ENCODE measurements at regions of chr17 and their contacts with region 1.

Region 1: GRCh38 chr17:82030470-82031302 is 792 bp upstream of the RAC3 start:
- DNase-seq: peak; percentile 78 to 88 (median 85)
- H3K4me3 ChIP-seq: peak overlapping the region in 1 of 2 donors; percentile 46
- H3K4me3 Mint-ChIP-seq: peak overlapping the region; percentile 79 to 89 (median 86)
- H3K27ac ChIP-seq: no peak overlapping the region
- H3K27ac Mint-ChIP-seq: peak overlapping the region in 6 of 7 donors; percentile 48 to 91 (median 76)
- H3K4me1 ChIP-seq: peaks cover 13% of the 10 kb centered on the region
- H3K4me1 Mint-ChIP-seq: peaks cover 5 to 14% (median 10%) of the 10 kb centered on the region in 4 donors
- H3K27me3 ChIP-seq: no peaks in the 10 kb centered on the region
- H3K27me3 Mint-ChIP-seq: no peaks in the 10 kb centered on the region

Region 2: DNA sequence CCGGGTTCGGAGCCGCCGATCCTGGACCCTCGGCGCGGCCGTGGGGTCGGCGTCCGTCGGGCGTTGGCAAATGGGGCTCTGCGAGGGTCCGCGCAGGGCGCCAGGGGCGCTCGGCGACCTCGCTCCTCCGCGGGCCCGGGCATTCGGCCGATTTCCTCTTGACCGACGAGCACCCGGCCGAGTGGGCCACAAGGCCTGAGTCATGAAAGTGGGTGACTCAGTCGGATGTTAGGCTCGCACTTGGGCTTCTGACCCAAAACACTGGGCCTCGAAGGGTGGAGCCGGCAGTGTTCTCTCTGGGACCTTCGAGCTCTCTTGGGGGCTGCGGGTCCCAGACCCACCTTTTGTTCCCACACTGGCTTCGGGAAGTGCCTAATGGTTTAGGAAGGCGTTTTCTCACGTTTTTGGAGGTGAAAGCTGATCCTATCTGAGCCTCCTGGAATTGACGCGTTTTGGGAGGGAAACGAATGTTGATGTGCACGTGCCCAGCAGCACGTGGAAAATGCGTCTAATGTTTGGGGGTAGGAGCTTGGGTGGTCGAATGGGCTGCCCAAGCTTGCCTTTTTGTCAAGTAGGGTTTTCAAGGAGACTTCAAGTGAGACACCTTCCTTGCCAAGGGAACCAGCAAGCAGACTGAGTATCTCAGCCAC is 346.3 kb before region 1 on chr17:
- CTCF ChIA-PET with region 1: no interaction called
- POLR2A ChIA-PET with region 1: no interaction called
- intact Hi-C with region 1: no loop called
- DNase-seq: peak in 1 of 5 donors; percentile 39
- H3K4me3 ChIP-seq: peak overlapping the region; percentile 80 to 93
- H3K4me3 Mint-ChIP-seq: peak overlapping the region; percentile 83 to 94 (median 84)
- H3K27ac ChIP-seq: peak overlapping the region; percentile 83
- H3K27ac Mint-ChIP-seq: peak overlapping the region; percentile 72 to 93 (median 83)
- H3K4me1 ChIP-seq: peaks cover 31% of the 10 kb centered on the region
- H3K4me1 Mint-ChIP-seq: peaks cover 20 to 58% (median 27%) of the 10 kb centered on the region in 4 donors
- H3K27me3 ChIP-seq: no peaks in the 10 kb centered on the region
- H3K27me3 Mint-ChIP-seq: no peaks in the 10 kb centered on the region

Region 3: DNA sequence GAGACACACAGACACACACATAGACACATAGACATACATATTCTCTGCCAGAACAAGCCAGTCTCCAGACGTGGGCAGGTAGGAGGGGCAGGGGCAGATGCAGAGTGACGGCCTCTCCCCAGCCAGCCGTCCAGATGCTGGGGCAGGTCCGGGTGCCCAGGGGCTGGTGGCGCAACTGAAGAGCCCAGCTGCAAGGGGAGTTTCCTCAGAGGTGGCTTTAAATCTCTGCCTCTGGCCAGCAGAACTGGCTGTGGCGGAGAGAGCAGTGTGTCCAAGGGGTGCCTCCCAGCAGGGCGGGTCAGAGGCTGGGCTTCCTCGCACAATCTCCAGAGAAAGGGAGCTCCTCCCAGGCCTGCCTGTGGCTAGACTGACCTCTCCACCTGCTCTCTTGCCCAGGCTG is 236.2 kb before region 1 on chr17:
- CTCF ChIA-PET with region 1: no interaction called
- POLR2A ChIA-PET with region 1: no interaction called
- intact Hi-C with region 1: no loop called
- DNase-seq: no peak
- H3K4me3 ChIP-seq: no peak overlapping the region
- H3K4me3 Mint-ChIP-seq: no peak overlapping the region
- H3K27ac ChIP-seq: no peak overlapping the region
- H3K27ac Mint-ChIP-seq: no peak overlapping the region
- H3K4me1 ChIP-seq: no peaks in the 10 kb centered on the region
- H3K4me1 Mint-ChIP-seq: no peaks in the 10 kb centered on the region
- H3K27me3 ChIP-seq: no peaks in the 10 kb centered on the region
- H3K27me3 Mint-ChIP-seq: peaks cover 1 to 2% of the 10 kb centered on the region in 2 donors

Region 4: GRCh38 chr17:82065638-82066303 is 35.1 kb after region 1 on chr17 and contains the start of gene DUS1L:
- CTCF ChIA-PET with region 1: interaction called, 3 read pairs
- POLR2A ChIA-PET with region 1: interaction called, 16 read pairs
- intact Hi-C with region 1: no loop called
- DNase-seq: peak; percentile 44 to 78 (median 70)
- H3K4me3 ChIP-seq: peak within 1 kb of the TSS; percentile 42 to 73
- H3K4me3 Mint-ChIP-seq: peak within 1 kb of the TSS; percentile 81 to 89 (median 86)
- H3K27ac ChIP-seq: peak within 1 kb of the TSS; percentile 66
- H3K27ac Mint-ChIP-seq: peak within 1 kb of the TSS; percentile 91 to 97 (median 94)
- H3K4me1 ChIP-seq: peaks cover 28% of the 10 kb centered on the region
- H3K4me1 Mint-ChIP-seq: peaks cover 0 to 23% (median 12%) of the 10 kb centered on the region in 4 donors
- H3K27me3 ChIP-seq: no peaks in the 10 kb centered on the region
- H3K27me3 Mint-ChIP-seq: no peaks in the 10 kb centered on the region
- total RNA-seq, gene DUS1L: 139 to 141 TPM

Region 5: DNA sequence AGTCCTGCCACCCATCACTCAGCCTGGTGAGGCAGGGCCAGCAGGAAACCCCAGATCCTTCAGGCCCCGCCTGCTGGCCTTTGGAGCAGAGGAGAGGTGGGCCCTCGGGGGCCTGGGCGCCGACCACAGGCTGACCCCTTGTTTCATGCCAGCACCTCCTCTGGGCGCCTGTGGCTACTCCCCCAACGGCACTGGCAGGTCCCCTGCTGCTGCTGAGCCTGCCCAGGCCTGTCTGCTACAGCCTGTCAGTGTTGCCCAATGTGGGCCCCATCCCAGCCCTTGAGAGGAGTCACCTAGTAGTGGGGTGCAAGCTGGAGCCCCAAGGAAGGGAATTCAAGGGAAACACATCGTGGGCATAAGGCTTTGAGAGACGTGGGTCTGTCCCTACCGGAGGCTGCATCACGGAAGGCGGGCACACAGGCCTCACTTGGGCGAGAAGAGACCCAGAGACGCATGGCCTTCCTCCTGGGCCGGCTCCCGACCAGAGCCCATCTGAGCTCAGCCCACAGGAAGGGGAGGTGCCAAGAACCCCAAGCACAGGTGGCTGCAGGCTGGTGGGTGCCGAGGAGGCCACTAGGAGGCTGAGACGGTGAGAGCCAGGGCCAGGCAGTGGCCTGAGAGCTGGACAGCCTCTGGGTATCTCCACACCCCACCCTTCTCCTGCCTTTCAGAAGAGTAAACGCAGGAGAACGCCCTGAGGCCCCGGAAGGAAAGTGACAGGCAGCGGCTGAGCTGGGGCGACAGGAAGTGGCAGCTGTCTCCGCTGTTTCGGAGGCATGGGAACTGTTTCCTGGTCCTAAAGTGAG is 75.4 kb after region 1 on chr17:
- CTCF ChIA-PET with region 1: interaction called, 14 read pairs
- POLR2A ChIA-PET with region 1: interaction called, 12 read pairs
- intact Hi-C with region 1: no loop called
- DNase-seq: peak; percentile 52 to 67 (median 54)
- H3K4me3 ChIP-seq: peak overlapping the region; percentile 63 to 84
- H3K4me3 Mint-ChIP-seq: peak overlapping the region; percentile 86 to 94 (median 89)
- H3K27ac ChIP-seq: peak overlapping the region; percentile 65
- H3K27ac Mint-ChIP-seq: peak overlapping the region; percentile 94 to 98 (median 97)
- H3K4me1 ChIP-seq: peaks cover 35% of the 10 kb centered on the region
- H3K4me1 Mint-ChIP-seq: peaks cover 9 to 51% (median 23%) of the 10 kb centered on the region in 4 donors
- H3K27me3 ChIP-seq: no peaks in the 10 kb centered on the region
- H3K27me3 Mint-ChIP-seq: no peaks in the 10 kb centered on the region

Region 6: GRCh38 chr17:82126556-82127314 is 96.0 kb after region 1 on chr17:
- CTCF ChIA-PET with region 1: interaction called, 4 read pairs
- POLR2A ChIA-PET with region 1: interaction called, 28 read pairs
- intact Hi-C with region 1: no loop called
- DNase-seq: peak; percentile 96 to 98 (median 97)
- H3K4me3 ChIP-seq: peak overlapping the region in 1 of 2 donors; percentile 45
- H3K4me3 Mint-ChIP-seq: peak overlapping the region; percentile 74 to 87 (median 82)
- H3K27ac ChIP-seq: peak overlapping the region; percentile 77
- H3K27ac Mint-ChIP-seq: peak overlapping the region; percentile 91 to 100 (median 99)
- H3K4me1 ChIP-seq: peaks cover 66% of the 10 kb centered on the region
- H3K4me1 Mint-ChIP-seq: peaks cover 27 to 70% (median 51%) of the 10 kb centered on the region in 4 donors
- H3K27me3 ChIP-seq: no peaks in the 10 kb centered on the region
- H3K27me3 Mint-ChIP-seq: no peaks in the 10 kb centered on the region

Region 7: DNA sequence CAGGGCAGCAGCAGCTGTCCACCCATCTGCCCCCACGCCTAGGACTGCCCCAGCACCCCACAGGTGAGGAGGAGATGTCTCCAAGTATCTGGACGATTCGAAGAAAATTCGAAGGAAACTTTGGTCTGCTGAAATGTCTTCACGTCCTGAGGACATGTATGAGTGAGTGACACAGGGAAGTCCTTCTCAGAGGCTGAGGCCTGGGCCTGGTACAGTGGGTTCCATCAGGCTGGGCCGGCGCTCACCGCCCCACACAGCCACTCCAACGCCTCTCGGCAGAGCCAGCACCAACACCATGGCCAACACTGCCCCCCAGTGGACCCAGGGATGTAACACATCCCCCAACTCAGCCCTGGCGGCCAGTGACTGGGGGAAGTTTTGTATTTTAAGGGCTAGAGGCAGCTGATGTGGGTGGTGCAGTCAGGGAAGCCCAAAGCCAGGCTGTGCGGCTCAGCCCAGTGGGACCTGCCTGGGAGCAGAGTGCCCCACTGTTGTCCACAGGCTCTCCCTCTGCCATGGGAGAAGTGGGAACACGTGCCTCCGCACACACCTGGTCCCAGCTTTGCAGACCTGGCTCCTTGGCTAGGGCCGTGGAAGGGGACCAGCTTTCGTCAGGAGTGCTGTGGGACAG is 123.2 kb after region 1 on chr17:
- CTCF ChIA-PET with region 1: interaction called, 70 read pairs
- POLR2A ChIA-PET with region 1: interaction called, 16 read pairs
- intact Hi-C with region 1: loop called (anchors 1 kb)
- DNase-seq: peak; percentile 76 to 86 (median 81)
- H3K4me3 ChIP-seq: no peak overlapping the region
- H3K4me3 Mint-ChIP-seq: no peak overlapping the region
- H3K27ac ChIP-seq: no peak overlapping the region
- H3K27ac Mint-ChIP-seq: peak overlapping the region in 6 of 7 donors; percentile 74 to 93 (median 89)
- H3K4me1 ChIP-seq: peaks cover 9% of the 10 kb centered on the region
- H3K4me1 Mint-ChIP-seq: peaks cover 5 to 7% (median 6%) of the 10 kb centered on the region in 4 donors
- H3K27me3 ChIP-seq: no peaks in the 10 kb centered on the region
- H3K27me3 Mint-ChIP-seq: no peaks in the 10 kb centered on the region

Region 8: GRCh38 chr17:82262344-82262743 is 231.7 kb after region 1 on chr17:
- CTCF ChIA-PET with region 1: no interaction called
- POLR2A ChIA-PET with region 1: no interaction called
- intact Hi-C with region 1: no loop called
- DNase-seq: no peak
- H3K4me3 ChIP-seq: no peak overlapping the region
- H3K4me3 Mint-ChIP-seq: no peak overlapping the region
- H3K27ac ChIP-seq: no peak overlapping the region
- H3K27ac Mint-ChIP-seq: peak overlapping the region in 4 of 7 donors; percentile 2 to 50 (median 48)
- H3K4me1 ChIP-seq: peaks cover 10% of the 10 kb centered on the region
- H3K4me1 Mint-ChIP-seq: peaks cover 31 to 62% (median 39%) of the 10 kb centered on the region in 4 donors
- H3K27me3 ChIP-seq: no peaks in the 10 kb centered on the region
- H3K27me3 Mint-ChIP-seq: no peaks in the 10 kb centered on the region

Region 9: DNA sequence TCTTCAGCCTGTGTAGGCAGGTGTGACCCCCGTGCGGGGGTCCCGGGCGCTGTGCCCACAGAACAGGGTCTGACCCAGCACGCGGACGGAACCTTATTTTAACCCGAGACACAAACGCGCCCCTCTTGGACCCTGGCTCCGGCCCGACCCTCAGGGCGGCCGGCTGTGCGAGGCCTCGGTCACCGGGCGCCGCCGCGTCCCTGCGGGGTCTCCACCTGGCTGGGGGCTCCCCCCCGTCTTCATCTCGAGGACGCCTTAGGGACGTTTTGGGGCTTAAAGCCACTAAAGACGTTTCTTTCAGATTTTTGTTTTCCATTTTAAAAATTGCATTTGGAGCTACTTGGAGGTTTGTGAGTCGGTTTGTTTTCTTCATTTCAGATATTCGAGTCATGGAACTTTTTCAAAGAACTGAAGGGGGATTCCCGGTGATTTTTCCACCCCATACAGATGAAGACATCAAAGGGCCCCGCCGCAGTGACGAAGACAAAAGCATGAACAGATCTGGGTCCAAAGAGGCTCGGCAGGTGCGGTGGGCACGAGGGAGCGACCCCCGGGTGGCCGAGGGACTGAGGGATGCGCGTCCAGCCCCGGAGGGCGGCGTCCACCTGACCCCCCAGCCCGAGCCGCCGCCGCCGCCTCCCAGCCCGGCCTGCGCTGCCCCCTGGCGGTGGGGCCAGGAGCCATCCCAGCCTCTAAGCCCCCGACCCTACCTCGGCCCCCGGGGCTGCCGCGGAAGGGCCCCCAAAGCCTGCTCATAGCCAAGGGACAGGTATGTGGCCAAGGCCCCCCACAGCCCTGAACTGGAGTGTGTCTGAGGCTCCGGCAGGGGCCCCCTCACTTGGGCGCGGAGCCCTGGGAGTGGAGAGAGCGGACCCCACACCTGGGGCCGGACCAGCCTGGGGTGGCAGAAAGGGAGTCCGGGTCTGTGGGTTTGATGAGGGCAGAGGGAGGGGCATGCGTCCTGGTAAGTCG is 290.6 kb after region 1 on chr17:
- CTCF ChIA-PET with region 1: interaction called, 11 read pairs
- POLR2A ChIA-PET with region 1: no interaction called
- intact Hi-C with region 1: no loop called
- DNase-seq: peak; percentile 79 to 96 (median 83)
- H3K4me3 ChIP-seq: peak overlapping the region in 1 of 2 donors; percentile 47
- H3K4me3 Mint-ChIP-seq: peak overlapping the region; percentile 60 to 88 (median 82)
- H3K27ac ChIP-seq: peak overlapping the region; percentile 66
- H3K27ac Mint-ChIP-seq: peak overlapping the region in 6 of 7 donors; percentile 86 to 96 (median 94)
- H3K4me1 ChIP-seq: peaks cover 41% of the 10 kb centered on the region
- H3K4me1 Mint-ChIP-seq: peaks cover 9 to 31% (median 21%) of the 10 kb centered on the region in 4 donors
- H3K27me3 ChIP-seq: no peaks in the 10 kb centered on the region
- H3K27me3 Mint-ChIP-seq: peaks cover 0 to 2% of the 10 kb centered on the region in 2 donors

Region 10: GRCh38 chr17:82551779-82552457 is 521.2 kb after region 1 on chr17:
- CTCF ChIA-PET with region 1: no interaction called
- POLR2A ChIA-PET with region 1: no interaction called
- intact Hi-C with region 1: loop called (anchors 2 kb)
- DNase-seq: peak; percentile 72 to 82 (median 76)
- H3K4me3 ChIP-seq: no peak overlapping the region
- H3K4me3 Mint-ChIP-seq: peak overlapping the region in 1 of 8 donors; percentile 24
- H3K27ac ChIP-seq: no peak overlapping the region
- H3K27ac Mint-ChIP-seq: peak overlapping the region; percentile 32 to 79 (median 57)
- H3K4me1 ChIP-seq: peaks cover 18% of the 10 kb centered on the region
- H3K4me1 Mint-ChIP-seq: peaks cover 24 to 55% (median 33%) of the 10 kb centered on the region in 4 donors
- H3K27me3 ChIP-seq: no peaks in the 10 kb centered on the region
- H3K27me3 Mint-ChIP-seq: no peaks in the 10 kb centered on the region

Measured in CD4-positive, alpha-beta memory T cell (primary cell).